A673 (cell line): ENCODE measurements at regions of chr2 and their contacts with region 1.

Region 1: GRCh38 chr2:50143822-50144575 is 887.9 kb downstream of the NRXN1 start:
- DNase-seq: peak; percentile 68
- H3K4me3 ChIP-seq: peak overlapping the region; percentile 38
- H3K27ac ChIP-seq: no peak overlapping the region
- H3K4me1 ChIP-seq: no peaks in the 10 kb centered on the region
- H3K27me3 ChIP-seq: no peaks in the 10 kb centered on the region
- CTCF ChIP-seq: peak; percentile 78

Region 2: DNA sequence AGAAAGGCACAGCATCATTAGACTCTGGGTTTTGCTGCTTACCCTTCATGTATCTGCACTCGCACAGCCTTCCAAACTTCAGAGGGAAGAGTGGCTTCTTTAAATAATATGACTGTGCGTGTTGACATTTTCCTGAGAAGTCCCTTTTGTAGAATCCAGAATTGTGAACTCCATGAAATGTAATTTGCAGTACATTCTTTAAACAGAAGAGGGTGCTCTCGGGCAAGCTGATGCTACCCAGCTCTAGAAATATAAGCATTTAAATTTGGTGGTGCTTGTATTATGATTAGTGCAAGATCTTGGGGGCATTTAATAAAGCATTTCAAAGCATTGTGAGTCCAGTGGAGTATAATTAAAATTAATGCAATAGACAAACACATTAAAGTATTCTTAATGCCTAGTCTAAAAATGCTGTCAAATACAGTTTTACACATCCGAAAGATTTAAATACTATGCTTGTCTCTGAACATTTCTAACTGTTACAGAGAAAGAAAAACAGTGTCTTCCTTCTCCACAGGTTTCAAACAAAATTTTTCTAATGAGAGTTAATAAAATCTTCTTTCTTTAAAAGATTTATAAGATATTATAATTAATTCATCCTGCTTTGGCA is 1543.7 kb before region 1 on chr2:
- CTCF ChIA-PET with region 1: no interaction called
- POLR2A ChIA-PET with region 1: no interaction called
- intact Hi-C with region 1: loop called (anchors 10 kb)
- DNase-seq: peak; percentile 56
- H3K4me3 ChIP-seq: no peak overlapping the region
- H3K27ac ChIP-seq: no peak overlapping the region
- H3K4me1 ChIP-seq: no peaks in the 10 kb centered on the region
- H3K27me3 ChIP-seq: no peaks in the 10 kb centered on the region
- CTCF ChIP-seq: peak; percentile 81

Region 3: DNA sequence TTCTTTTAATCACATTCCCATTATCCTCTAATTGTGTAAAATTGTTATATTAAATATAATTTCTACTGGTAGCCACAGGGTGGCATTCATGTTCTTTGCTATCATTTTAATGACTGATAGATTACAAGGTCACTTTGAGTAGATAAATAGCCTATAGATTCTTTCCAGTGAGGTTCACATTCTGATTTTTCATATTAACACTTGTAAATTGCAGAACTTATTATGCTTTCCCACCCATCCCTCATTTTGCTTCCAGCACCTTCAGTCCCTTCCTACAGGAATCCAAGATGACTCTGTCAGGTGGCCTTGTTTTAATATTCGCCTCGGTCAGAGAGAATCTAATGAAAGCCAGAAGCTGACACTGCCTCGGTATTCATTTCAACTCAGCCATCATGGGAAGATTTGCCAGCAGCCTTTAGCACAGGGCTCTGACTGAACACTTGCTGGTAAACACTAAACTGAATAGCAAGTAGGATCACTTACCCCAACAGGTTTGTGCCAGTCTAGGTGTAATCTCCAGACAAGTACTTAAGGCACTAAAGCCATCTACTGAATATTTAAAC is 888.5 kb before region 1 on chr2:
- CTCF ChIA-PET with region 1: no interaction called
- POLR2A ChIA-PET with region 1: no interaction called
- intact Hi-C with region 1: loop called (anchors 10 kb)
- DNase-seq: no peak
- H3K4me3 ChIP-seq: no peak overlapping the region
- H3K27ac ChIP-seq: no peak overlapping the region
- H3K4me1 ChIP-seq: no peaks in the 10 kb centered on the region
- H3K27me3 ChIP-seq: no peaks in the 10 kb centered on the region
- CTCF ChIP-seq: no peak

Region 4: GRCh38 chr2:49616800-49617199 is 527.2 kb before region 1 on chr2:
- CTCF ChIA-PET with region 1: no interaction called
- POLR2A ChIA-PET with region 1: no interaction called
- intact Hi-C with region 1: loop called (anchors 5 kb)
- DNase-seq: peak; percentile 52
- H3K4me3 ChIP-seq: no peak overlapping the region
- H3K27ac ChIP-seq: no peak overlapping the region
- H3K4me1 ChIP-seq: no peaks in the 10 kb centered on the region
- H3K27me3 ChIP-seq: no peaks in the 10 kb centered on the region
- CTCF ChIP-seq: peak; percentile 62

Region 5: DNA sequence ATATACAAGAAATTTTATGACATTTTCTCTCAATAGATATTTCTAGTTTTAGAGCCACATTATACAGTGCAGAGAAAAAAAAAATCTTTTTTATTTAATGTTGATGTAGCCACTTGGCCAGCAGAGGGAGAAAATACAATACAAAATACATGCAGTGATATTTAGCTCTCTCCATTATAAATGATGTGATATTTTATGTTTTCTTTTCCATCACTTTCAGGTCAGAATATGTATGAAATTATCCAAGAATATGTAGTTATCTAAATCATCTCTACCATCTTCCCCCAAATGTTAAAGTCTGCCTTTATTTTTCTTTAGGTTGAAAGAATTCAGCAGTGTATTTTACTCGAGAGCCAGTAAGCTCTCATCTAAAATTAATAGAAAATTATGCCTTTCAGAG is 456.1 kb before region 1 on chr2:
- CTCF ChIA-PET with region 1: interaction called, 7 read pairs
- POLR2A ChIA-PET with region 1: no interaction called
- intact Hi-C with region 1: loop called (anchors 5 kb)
- DNase-seq: peak; percentile 1
- H3K4me3 ChIP-seq: no peak overlapping the region
- H3K27ac ChIP-seq: no peak overlapping the region
- H3K4me1 ChIP-seq: no peaks in the 10 kb centered on the region
- H3K27me3 ChIP-seq: no peaks in the 10 kb centered on the region
- CTCF ChIP-seq: peak; percentile 52; the same call in 1 of the 2 replicates

Region 6: DNA sequence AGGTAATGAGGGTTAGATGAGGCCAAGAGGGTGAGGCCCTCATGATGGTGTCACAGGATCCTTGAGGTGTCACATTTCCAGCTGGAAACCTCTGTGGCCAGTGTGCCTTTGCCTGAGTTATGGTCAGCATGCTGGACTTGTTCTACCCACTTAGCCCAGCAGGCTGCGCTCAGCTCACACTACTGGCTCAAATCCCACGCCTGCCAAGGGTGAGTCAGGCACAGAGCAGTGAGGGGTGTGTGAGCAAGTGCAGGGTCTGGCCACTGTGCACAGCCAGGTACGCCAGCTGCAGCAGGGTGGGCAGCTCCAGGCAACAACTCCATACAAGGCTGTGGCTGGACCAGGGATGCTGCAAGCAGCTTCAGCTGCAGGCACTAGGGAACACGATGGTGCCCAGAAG is 373.1 kb before region 1 on chr2:
- CTCF ChIA-PET with region 1: interaction called, 7 read pairs
- POLR2A ChIA-PET with region 1: no interaction called
- intact Hi-C with region 1: loop called (anchors 2 kb)
- DNase-seq: peak; percentile 43
- H3K4me3 ChIP-seq: no peak overlapping the region
- H3K27ac ChIP-seq: no peak overlapping the region
- H3K4me1 ChIP-seq: no peaks in the 10 kb centered on the region
- H3K27me3 ChIP-seq: no peaks in the 10 kb centered on the region
- CTCF ChIP-seq: peak; percentile 56

Region 7: DNA sequence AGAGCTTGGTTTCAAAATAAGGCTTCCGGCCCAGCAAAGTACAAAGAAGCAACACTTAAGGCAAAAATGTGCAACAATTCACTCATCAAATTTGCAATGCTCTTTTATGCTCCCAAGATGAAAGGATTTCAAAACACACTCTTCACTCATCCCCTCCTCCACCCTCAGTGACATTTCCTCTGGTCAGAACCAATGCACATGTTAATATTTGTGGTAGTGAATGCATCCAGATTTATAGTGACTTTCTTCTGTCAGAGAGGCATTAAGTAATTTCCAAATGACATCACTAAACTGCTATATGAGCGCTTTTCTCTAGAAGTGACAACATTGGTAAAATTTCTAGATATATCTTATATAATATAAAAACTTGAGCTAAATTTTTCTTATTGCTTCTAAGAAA is 87.5 kb after region 1 on chr2:
- CTCF ChIA-PET with region 1: no interaction called
- POLR2A ChIA-PET with region 1: no interaction called
- intact Hi-C with region 1: no loop called
- DNase-seq: no peak
- H3K4me3 ChIP-seq: no peak overlapping the region
- H3K27ac ChIP-seq: no peak overlapping the region
- H3K4me1 ChIP-seq: no peaks in the 10 kb centered on the region
- H3K27me3 ChIP-seq: peaks cover 3% of the 10 kb centered on the region
- CTCF ChIP-seq: no peak